ENCODE measurements at regions of chr5 and their contacts with region 1.

Region 1: GRCh38 chr5:139633295-139634027 is 14.7 kb upstream of the CXXC5 start:
- DNase-seq: peak; percentile 75
- CTCF ChIP-seq: peak; percentile 99

Region 2: GRCh38 chr5:139210585-139210984 is 422.9 kb before region 1 on chr5:
- CTCF ChIA-PET with region 1: no interaction called
- POLR2A ChIA-PET with region 1: no interaction called
- DNase-seq: no peak
- CTCF ChIP-seq: no peak

Region 3: DNA sequence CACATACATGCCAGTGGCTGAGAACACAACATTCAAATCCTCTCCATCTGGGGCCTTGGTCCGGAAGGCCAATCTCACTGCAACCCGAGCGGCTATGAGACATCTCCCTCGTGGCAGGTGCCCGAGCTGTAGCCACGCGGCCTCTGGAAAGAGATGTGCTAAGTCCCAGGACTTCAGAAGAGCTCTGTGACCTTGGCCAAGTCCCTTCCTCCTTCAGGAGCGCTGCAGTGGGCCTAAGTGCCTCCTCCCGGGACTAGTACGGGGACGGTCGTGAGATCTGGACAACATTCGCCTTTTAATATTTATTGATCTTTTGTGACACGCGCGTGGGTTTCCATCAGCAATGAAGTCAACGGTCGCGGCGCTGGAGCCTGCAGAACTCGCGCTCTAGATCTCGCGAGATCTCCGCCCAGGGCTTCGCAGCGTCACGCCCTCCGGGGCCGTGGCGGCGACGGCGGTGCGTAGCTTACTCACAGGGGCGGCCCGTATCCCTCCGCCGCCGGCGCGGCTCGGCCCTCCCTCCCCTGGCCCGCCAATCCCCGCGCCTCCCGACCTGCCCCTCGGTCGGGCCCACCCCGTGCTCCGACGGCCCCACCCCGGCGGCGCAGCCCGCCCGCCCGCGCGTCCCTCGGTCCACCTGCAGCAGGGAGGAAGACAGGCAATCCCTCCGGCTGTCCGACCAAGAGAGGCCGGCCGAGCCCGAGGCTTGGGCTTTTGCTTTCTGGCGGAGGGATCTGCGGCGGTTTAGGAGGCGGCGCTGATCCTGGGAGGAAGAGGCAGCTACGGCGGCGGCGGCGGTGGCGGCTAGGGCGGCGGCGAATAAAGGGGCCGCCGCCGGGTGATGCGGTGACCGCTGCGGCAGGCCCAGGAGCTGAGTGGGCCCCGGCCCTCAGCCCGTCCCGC is 72.5 kb before region 1 on chr5 and contains the start of gene UBE2D2:
- CTCF ChIA-PET with region 1: interaction called, 25 read pairs
- POLR2A ChIA-PET with region 1: interaction called, 3 read pairs
- DNase-seq: peak; percentile 96
- CTCF ChIP-seq: no peak

Region 4: DNA sequence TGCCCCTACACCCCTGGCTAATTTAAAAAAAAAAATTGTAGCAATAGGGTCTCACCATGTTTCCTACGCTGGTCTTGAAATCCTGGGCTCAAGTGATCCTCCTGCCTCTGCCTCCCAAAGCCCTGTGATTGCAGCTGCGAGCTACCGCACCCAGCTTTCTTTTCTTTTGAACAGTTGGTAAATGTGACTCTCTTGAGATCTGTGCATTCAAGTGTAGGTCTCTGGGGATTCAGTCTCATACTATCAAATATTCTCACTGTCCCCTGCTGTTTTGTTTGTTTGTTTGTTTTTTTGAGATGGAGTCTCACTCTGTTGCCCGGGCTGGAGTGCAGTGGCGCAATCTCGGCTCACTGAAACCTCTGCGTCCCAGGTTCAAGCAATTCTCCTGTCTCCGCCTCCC is 27.6 kb before region 1 on chr5:
- CTCF ChIA-PET with region 1: interaction called, 39 read pairs
- POLR2A ChIA-PET with region 1: no interaction called
- DNase-seq: no peak
- CTCF ChIP-seq: no peak

Region 5: GRCh38 chr5:139651853-139652787 is 18.7 kb after region 1 on chr5:
- CTCF ChIA-PET with region 1: interaction called, 229 read pairs
- POLR2A ChIA-PET with region 1: interaction called, 31 read pairs
- DNase-seq: peak; percentile 93
- CTCF ChIP-seq: no peak

Region 6: GRCh38 chr5:139678751-139679750 is 45.6 kb after region 1 on chr5:
- CTCF ChIA-PET with region 1: interaction called, 288 read pairs
- POLR2A ChIA-PET with region 1: no interaction called
- DNase-seq: no peak
- CTCF ChIP-seq: no peak

Region 7: GRCh38 chr5:139711067-139711905 is 77.8 kb after region 1 on chr5:
- CTCF ChIA-PET with region 1: interaction called, 16 read pairs
- POLR2A ChIA-PET with region 1: interaction called, 3 read pairs
- DNase-seq: peak; percentile 70
- CTCF ChIP-seq: peak; percentile 37

Region 8: DNA sequence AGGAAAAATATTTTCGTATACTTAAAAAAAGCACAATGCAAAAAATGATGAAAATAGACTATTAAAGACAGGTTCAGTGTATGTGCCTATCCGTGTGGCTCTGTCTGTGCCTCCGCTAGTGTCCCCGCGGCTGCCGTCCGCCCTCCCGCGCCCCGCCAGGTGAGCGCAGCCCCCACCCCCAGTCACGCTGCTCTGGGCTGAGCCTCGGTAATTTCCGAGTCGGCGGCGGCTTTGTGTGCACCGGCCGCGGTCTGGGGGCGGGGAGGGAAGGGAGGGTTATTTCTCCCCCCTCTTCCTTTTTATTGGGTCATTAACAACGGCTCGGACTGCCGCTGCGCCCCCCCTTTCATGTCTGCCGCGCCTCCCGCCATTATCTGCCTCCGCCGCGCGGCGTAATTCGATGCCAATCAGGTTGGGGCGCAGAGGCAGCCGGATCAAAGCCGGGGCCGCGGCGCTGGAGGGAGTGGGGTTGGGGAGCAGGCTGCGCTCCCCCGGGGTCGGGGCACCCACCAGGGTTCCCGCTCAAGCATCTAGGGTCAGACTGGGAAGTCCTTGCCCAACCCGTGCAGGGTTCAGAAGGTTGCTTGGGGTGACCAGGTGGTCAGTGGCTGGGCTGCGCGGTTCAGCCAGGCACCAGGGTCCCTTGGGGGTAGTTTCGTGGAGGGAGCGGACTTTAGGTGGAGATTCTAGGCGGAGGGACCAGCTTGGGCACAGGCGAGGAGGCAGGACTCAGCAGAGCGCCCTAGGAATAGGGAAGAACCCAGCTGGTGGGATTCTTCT is 122.6 kb after region 1 on chr5:
- CTCF ChIA-PET with region 1: interaction called, 439 read pairs
- POLR2A ChIA-PET with region 1: no interaction called
- DNase-seq: peak; percentile 68
- CTCF ChIP-seq: no peak

Measured in GM10248 (cell line).